ENCODE measurements at regions of chr2 and their contacts with region 1.

Region 1: DNA sequence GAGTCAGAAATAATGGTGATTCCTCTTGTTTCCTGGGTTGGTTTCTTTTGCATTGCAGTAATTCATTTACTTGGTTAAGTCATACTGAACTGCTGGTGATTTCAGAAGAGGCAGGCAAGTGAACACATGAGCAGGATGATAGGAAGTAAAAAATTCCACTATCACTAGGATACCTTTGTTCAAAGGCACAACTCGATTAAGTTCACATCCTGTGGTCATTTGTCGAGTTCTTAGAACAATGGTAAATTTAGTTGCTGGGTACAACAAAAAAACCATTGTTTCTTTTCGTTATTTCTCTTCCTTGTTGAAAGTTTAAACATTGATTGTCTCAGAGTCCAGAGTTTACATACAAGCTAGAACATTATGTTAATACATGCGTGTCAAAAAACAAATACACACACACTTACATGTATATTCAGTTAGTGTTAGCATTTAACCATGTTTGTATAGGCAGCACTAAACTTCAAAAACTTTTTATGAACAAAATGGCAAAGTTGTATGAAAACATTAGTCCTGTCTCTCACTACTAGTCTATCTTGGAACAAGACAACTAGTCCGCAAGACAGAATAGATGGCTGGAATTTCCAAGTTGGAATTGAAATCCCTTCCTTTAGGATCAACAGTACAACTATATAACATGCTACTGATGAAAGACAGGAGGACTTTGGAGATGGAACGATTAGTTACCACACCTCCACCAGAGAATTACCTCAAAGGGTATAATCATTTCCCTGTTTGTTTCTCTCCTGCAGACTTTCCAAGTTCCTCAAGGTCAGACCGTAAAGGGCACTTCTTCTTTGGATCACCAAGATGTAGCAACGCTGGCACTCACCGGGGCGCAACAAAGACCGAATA is 26.2 kb downstream of the STK39 start:
- DNase-seq: no peak
- H3K4me3 Mint-ChIP-seq: no peak overlapping the region
- H3K27ac Mint-ChIP-seq: no peak overlapping the region
- H3K4me1 Mint-ChIP-seq: peaks cover 24% of the 10 kb centered on the region
- H3K27me3 Mint-ChIP-seq: no peaks in the 10 kb centered on the region

Region 2: DNA sequence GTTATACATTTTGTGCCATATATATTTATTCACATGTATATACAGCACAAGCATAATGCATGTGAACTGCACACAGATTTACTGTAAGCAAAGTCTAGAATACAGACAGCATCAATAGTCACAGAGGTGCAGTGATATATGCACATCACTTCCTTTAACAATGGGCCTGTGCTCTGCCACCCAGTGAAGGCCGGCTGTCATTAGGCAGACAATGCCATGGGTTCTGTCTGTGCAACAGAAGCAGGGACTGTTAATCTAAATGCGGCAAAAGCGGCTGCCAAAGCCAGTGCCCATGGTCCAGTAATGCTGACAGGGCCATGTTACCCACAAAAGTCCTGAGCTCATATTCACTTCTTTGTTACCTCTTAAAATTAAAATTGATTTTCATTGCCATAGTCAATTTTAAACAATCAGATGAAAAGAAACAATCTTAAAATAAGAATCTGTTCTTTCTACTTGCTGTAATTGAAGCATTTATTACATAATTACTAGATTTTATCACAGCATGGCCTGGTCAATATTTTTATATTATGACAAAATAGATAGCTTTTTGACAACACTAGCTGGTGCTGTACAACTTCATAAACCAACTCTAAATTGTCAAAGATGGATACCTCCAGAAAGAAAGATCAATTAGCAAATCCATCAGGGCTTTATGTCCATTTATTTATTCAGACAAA is 205.8 kb before region 1 on chr2:
- intact Hi-C with region 1: no loop called
- DNase-seq: no peak
- H3K4me3 Mint-ChIP-seq: no peak overlapping the region
- H3K27ac Mint-ChIP-seq: no peak overlapping the region
- H3K4me1 Mint-ChIP-seq: no peaks in the 10 kb centered on the region
- H3K27me3 Mint-ChIP-seq: no peaks in the 10 kb centered on the region

Region 3: DNA sequence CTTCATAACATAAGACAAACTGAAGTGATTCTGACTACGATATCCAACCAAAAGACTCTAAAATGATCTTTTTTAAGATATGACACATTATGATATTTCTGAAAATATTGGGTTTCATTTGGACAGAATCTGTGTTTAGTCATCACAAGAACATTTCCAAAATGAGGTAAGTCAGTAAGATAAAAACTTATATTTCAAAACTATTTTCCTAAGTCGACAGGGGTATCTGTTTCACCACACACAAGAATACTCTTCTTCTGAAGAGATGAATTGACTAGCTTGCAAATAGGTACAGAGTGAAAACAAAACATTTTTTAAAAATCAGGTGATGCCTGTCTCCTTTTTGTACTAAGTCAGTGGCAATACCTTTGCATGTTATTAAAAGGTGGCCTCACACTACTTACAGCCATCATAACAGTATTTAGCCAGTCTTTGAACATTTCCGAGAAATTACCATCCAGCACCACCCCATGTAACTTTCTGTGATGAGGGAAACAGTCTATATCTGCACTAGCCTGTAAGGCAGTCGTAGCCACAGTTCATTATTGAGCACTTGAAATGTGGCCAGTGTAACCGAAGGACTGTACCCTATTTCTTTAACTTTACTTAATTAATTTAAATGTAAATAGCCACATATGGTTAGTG is 12.7 kb after region 1 on chr2:
- intact Hi-C with region 1: loop called (anchors 1 kb)
- DNase-seq: no peak
- H3K4me3 Mint-ChIP-seq: no peak overlapping the region
- H3K27ac Mint-ChIP-seq: peak overlapping the region; percentile 32
- H3K4me1 Mint-ChIP-seq: peaks cover 33% of the 10 kb centered on the region
- H3K27me3 Mint-ChIP-seq: no peaks in the 10 kb centered on the region